Mammary epithelial cell (primary cell): ENCODE measurements at regions of chrX and their contacts with region 1.

Region 1: DNA sequence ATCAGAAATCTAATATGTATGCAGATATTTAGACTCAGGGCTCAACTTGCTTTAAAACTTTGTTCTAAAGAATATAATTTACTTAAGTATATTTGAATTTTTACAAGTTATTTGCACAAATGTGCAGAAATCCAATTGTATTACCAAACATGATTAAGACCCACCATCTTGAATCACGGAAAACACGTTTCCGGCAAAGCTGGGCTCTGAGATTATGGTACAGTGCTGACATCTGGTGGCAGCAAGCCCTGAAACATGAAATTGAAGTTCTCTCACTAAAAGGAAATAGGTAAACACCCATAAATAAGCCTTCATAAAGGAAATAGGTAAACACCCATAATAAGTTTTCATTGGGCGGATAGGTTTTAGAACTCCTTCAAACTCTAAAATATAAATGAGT is 98.3 kb upstream of the MAOA start:
- DNase-seq: peak; percentile 31
- H3K4me3 ChIP-seq: no peak overlapping the region
- H3K27ac ChIP-seq: no peak overlapping the region
- H3K4me1 ChIP-seq: peaks cover 5% of the 10 kb centered on the region
- H3K27me3 ChIP-seq: no peaks in the 10 kb centered on the region
- CTCF ChIP-seq: peak; percentile 69 to 81

Region 2: DNA sequence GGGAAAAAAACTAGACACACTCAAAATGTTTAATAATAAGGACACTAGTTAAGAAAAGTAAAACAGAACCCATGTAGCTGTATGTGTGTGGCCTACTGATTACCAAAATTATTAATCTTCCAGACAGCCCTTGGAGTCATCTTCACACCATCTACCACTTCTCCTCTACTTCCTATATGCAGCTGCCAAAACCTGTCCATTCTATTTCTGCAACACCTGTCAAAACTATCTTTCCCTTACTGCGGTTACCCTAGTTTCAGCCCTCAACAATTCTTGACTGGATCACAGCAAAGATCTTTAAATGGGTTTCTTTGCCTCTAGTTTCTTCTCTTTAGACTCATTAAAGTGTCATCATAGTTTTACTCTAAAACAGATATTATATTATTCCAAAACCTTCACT is 1761.2 kb before region 1 on chrX:
- CTCF ChIA-PET with region 1: no interaction called
- dilution Hi-C with region 1: no loop called
- in situ Hi-C with region 1: loop called in 1 of 2 experiments (anchors 25 kb)
- intact Hi-C with region 1: loop called (anchors 2 kb)
- DNase-seq: no peak
- H3K4me3 ChIP-seq: no peak overlapping the region
- H3K27ac ChIP-seq: no peak overlapping the region
- H3K4me1 ChIP-seq: no peaks in the 10 kb centered on the region
- H3K27me3 ChIP-seq: peaks cover 2% of the 10 kb centered on the region
- CTCF ChIP-seq: no peak

Region 3: DNA sequence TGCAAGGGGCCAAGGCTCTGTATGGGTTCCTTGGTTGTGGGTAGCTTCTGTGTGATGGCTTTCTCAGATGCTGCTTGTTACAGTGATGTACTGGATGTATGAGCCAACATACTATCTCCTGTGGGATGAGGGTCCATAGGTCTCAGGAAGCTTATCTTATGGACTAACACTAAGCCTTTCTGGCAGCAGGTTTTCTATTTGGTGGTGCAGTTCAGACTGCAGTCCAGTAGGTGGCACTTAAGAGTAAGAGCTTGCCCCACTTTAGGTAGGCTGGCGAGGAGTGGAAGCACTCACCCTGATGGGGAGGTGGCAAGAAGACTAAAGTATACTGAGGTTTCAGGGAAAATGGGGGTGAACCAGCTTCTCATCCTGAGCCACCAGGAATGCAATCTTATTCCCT is 208.4 kb before region 1 on chrX:
- CTCF ChIA-PET with region 1: interaction called, 3 read pairs
- dilution Hi-C with region 1: no loop called
- in situ Hi-C with region 1: loop called (anchors 10 kb)
- intact Hi-C with region 1: loop called (anchors 1 kb)
- DNase-seq: peak; percentile 32
- H3K4me3 ChIP-seq: no peak overlapping the region
- H3K27ac ChIP-seq: no peak overlapping the region
- H3K4me1 ChIP-seq: no peaks in the 10 kb centered on the region
- H3K27me3 ChIP-seq: peaks cover 8% of the 10 kb centered on the region
- CTCF ChIP-seq: peak; percentile 86 to 93

Region 4: GRCh38 chrX:43373037-43373436 is 184.8 kb before region 1 on chrX:
- CTCF ChIA-PET with region 1: no interaction called
- dilution Hi-C with region 1: no loop called
- in situ Hi-C with region 1: no loop called
- intact Hi-C with region 1: no loop called
- DNase-seq: no peak
- H3K4me3 ChIP-seq: no peak overlapping the region
- H3K27ac ChIP-seq: no peak overlapping the region
- H3K4me1 ChIP-seq: no peaks in the 10 kb centered on the region
- H3K27me3 ChIP-seq: no peaks in the 10 kb centered on the region
- CTCF ChIP-seq: no peak

Region 5: GRCh38 chrX:43939187-43939926 is 381.6 kb after region 1 on chrX:
- CTCF ChIA-PET with region 1: no interaction called
- dilution Hi-C with region 1: no loop called
- in situ Hi-C with region 1: no loop called
- intact Hi-C with region 1: loop called (anchors 5 kb)
- DNase-seq: no peak
- H3K4me3 ChIP-seq: no peak overlapping the region
- H3K27ac ChIP-seq: no peak overlapping the region
- H3K4me1 ChIP-seq: no peaks in the 10 kb centered on the region
- H3K27me3 ChIP-seq: peaks cover 3% of the 10 kb centered on the region
- CTCF ChIP-seq: peak in 1 of 2 donors; percentile 20